GM23248 (cell line): ENCODE measurements at regions of chr12 and their contacts with region 1.

Region 1: GRCh38 chr12:6062757-6063735 is 61.4 kb downstream of the VWF start:
- DNase-seq: peak; percentile 65
- H3K4me3 ChIP-seq: no peak overlapping the region
- H3K27ac ChIP-seq: no peak overlapping the region
- H3K4me1 ChIP-seq: peaks cover 15% of the 10 kb centered on the region
- H3K27me3 ChIP-seq: no peaks in the 10 kb centered on the region

Region 2: GRCh38 chr12:5861416-5861815 is 201.6 kb before region 1 on chr12:
- in situ Hi-C with region 1: no loop called
- DNase-seq: no peak
- H3K4me3 ChIP-seq: no peak overlapping the region
- H3K27ac ChIP-seq: no peak overlapping the region
- H3K4me1 ChIP-seq: no peaks in the 10 kb centered on the region
- H3K27me3 ChIP-seq: no peaks in the 10 kb centered on the region; the same call in 1 of the 2 replicates

Region 3: GRCh38 chr12:6182116-6182898 is 119.3 kb after region 1 on chr12:
- in situ Hi-C with region 1: loop called (anchors 10 kb)
- DNase-seq: peak; percentile 77
- H3K4me3 ChIP-seq: no peak overlapping the region
- H3K27ac ChIP-seq: peak overlapping the region; percentile 41
- H3K4me1 ChIP-seq: peaks cover 47% of the 10 kb centered on the region
- H3K27me3 ChIP-seq: no peaks in the 10 kb centered on the region

Region 4: DNA sequence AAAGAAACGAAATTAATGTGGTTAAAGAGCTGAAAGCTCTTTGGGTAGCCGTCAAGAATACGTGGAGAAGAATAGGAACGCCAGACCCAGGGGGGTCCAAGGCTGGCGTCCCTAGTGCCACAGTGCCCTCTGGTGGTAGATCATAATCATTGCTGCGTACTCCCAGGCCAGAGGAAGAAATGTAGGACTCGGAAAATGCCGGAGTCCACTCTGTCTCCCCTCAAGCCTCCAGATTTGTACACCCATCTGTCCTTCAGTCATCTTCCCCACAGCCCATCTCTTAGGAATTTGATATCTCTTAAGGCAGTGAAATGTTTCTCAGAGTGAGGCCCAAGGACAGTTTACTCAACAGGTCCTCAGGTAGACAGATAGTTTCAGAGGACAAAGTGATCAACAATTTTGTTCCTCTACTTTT is 222.0 kb after region 1 on chr12:
- in situ Hi-C with region 1: loop called (anchors 5 kb)
- DNase-seq: peak; percentile 78
- H3K4me3 ChIP-seq: no peak overlapping the region
- H3K27ac ChIP-seq: no peak overlapping the region; the same call in 1 of the 2 replicates
- H3K4me1 ChIP-seq: peaks cover 35% of the 10 kb centered on the region
- H3K27me3 ChIP-seq: no peaks in the 10 kb centered on the region